ENCODE measurements at regions of chr14 and their contacts with region 1.

Region 1: GRCh38 chr14:70907176-70907995 is at the start of gene PCNX1:
- DNase-seq: peak; percentile 79
- ATAC-seq: peak; percentile 89
- H3K4me3 ChIP-seq: peak within 1 kb of the TSS; percentile 97
- H3K27ac ChIP-seq: peak within 1 kb of the TSS; percentile 87
- H3K4me1 ChIP-seq: peaks cover 17% of the 10 kb centered on the region
- H3K27me3 ChIP-seq: no peaks in the 10 kb centered on the region
- CTCF ChIP-seq: peak; percentile 80
- POLR2A ChIP-seq: peak; percentile 75
- RAD21 ChIP-seq: peak; percentile 62
- total RNA-seq, gene PCNX1: 43.7 and 45.3 TPM in 2 replicates

Region 2: GRCh38 chr14:70816525-70816924 is 90.9 kb before region 1 on chr14:
- CTCF ChIA-PET with region 1: interaction called, 13 read pairs
- POLR2A ChIA-PET with region 1: no interaction called
- dilution Hi-C with region 1: no loop called
- in situ Hi-C with region 1: no loop called
- intact Hi-C with region 1: loop called (anchors 2 kb)
- DNase-seq: no peak
- ATAC-seq: no peak
- H3K4me3 ChIP-seq: no peak overlapping the region
- H3K27ac ChIP-seq: no peak overlapping the region
- H3K4me1 ChIP-seq: no peaks in the 10 kb centered on the region
- H3K27me3 ChIP-seq: peaks cover 13% of the 10 kb centered on the region
- CTCF ChIP-seq: no peak
- POLR2A ChIP-seq: no peak
- RAD21 ChIP-seq: no peak

Region 3: DNA sequence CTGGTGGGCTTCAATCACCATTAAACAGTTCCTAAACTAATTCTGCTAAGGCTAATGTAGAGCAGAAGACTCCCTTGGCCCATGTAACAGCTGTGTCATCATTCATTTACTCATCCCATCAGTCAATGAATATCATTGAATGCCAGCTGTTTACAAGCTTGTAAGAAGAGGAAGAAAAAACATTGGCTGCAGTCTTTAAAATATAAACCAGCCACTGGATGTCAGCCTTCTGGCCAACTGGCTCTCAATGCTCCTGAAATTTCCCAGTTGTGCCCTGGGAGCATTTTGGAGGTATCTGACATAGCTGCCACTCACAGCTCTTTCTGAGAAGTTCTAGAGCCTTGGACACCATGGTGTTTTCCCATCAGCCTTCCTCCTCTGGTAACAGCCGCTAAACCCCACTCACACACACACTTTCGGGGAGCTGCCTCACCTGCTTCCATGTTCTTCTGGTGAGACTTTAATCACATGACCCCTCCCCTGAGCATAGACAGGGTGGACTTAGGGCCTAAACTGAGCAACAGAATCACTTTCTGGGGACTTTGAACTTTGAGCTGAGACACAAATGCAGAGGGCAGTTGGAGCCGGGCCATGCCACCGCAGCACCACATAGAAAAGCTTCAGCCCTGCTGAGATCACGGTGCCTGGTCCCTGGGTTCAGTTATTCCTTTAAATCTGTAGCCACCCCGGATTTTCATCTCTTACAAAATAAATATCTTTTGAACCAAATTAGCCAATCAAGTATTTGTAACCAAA is 79.8 kb before region 1 on chr14:
- CTCF ChIA-PET with region 1: interaction called, 13 read pairs
- POLR2A ChIA-PET with region 1: no interaction called
- dilution Hi-C with region 1: no loop called
- in situ Hi-C with region 1: no loop called
- intact Hi-C with region 1: no loop called
- DNase-seq: no peak
- ATAC-seq: no peak
- H3K4me3 ChIP-seq: no peak overlapping the region
- H3K27ac ChIP-seq: no peak overlapping the region
- H3K4me1 ChIP-seq: no peaks in the 10 kb centered on the region
- H3K27me3 ChIP-seq: peaks cover 1% of the 10 kb centered on the region; the same call in 1 of the 2 replicates
- CTCF ChIP-seq: peak; percentile 10; the same call in 1 of the 2 replicates
- POLR2A ChIP-seq: no peak
- RAD21 ChIP-seq: 0 out of 2 replicates have a peak, but pooled peaks have one; percentile 8

Region 4: DNA sequence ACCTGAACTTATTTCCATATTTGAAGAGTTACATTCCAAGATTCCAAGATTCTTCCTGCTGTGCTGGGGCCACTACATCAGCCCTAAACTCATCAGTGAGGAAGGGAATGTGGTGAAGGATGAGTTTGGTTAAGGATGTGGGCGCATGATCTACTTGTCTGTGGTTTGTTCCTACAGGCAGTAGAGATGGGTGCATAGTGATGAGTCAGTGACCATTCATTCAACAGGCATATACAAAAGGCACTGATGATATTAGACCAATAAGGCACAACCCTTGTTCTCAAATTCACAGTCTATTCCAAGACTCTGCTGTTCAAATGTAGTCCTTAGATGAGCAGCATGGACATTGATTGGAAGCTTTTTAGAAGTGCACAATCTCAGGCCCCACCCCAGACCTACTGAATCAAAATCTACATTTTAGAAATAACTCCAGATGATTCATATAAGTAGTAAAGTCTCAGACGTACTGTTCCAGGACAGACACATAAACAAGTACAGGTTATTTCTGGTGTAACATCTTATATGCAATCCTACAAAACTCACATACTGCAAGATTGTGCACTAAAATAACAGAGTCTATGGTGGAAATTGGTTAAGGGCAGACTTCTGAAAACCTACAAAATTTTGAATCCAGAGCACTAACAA is 50.4 kb before region 1 on chr14:
- CTCF ChIA-PET with region 1: no interaction called
- POLR2A ChIA-PET with region 1: no interaction called
- dilution Hi-C with region 1: no loop called
- in situ Hi-C with region 1: no loop called
- intact Hi-C with region 1: no loop called
- DNase-seq: peak; percentile 96
- ATAC-seq: peak; percentile 99
- H3K4me3 ChIP-seq: no peak overlapping the region
- H3K27ac ChIP-seq: no peak overlapping the region
- H3K4me1 ChIP-seq: peaks cover 3% of the 10 kb centered on the region; the same call in 1 of the 2 replicates
- H3K27me3 ChIP-seq: no peaks in the 10 kb centered on the region
- CTCF ChIP-seq: no peak
- POLR2A ChIP-seq: no peak
- RAD21 ChIP-seq: no peak; the same call in 1 of the 2 replicates

Region 5: DNA sequence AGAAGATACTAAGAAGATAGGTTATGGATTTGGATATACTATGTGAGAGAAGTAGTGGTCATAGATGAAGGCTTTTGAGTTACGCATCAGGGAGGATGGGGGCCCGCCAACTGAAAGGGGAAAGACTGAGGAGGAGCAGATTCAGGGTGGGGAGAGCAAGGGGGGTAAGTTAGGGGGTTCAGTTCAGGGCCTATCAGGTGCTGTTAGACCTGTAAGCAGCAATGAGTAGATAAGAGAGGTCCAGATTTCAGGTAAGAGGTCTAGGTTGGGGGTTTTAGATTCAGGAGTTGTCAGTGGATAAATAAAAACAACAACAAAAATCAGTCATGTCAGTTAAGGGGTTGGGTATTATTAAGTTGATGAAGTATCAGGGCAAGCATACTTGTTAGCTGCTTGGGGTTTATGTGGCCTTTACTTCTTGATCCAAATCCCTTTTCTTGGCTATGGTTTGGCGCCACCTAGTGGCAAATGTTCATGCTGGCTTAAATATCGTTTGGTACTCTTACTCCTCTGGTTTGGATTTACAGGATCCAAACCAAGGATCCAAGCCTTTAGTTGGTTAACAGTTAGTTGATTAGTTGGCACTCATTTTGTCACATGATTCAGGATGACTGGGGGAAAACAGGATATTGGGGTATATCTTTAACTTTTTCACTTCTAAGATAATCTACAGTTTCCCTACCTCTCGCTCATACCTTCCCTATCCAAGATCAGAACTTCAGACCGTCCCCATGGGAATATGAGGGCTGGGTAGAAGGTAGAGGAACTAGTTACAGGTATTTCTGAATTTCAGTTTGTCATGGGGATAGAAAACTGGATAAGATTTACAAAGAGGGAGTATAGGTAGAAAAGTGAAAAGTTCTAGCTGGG is 65.0 kb after region 1 on chr14:
- CTCF ChIA-PET with region 1: interaction called, 4 read pairs
- POLR2A ChIA-PET with region 1: no interaction called
- dilution Hi-C with region 1: no loop called
- in situ Hi-C with region 1: no loop called
- intact Hi-C with region 1: loop called (anchors 1 kb)
- DNase-seq: peak; percentile 88
- ATAC-seq: peak; percentile 90
- H3K4me3 ChIP-seq: no peak overlapping the region
- H3K27ac ChIP-seq: no peak overlapping the region
- H3K4me1 ChIP-seq: peaks cover 2% of the 10 kb centered on the region; the same call in 1 of the 2 replicates
- H3K27me3 ChIP-seq: no peaks in the 10 kb centered on the region
- CTCF ChIP-seq: peak; percentile 91
- POLR2A ChIP-seq: peak; percentile 22; the same call in 1 of the 2 replicates
- RAD21 ChIP-seq: peak; percentile 90

Measured in IMR-90 (cell line).